ENCODE measurements at regions of chr1 and their contacts with region 1.

Region 1: GRCh38 chr1:41432481-41433280 is 51.8 kb downstream of the EDN2 start:
- DNase-seq: peak; percentile 72 to 85 (median 81)
- H3K4me3 ChIP-seq: no peak overlapping the region
- H3K27ac ChIP-seq: no peak overlapping the region
- H3K4me1 ChIP-seq: peaks cover 0 to 19% (median 8%) of the 10 kb centered on the region in 4 experiments
- H3K27me3 ChIP-seq: peaks cover 0 to 24% (median 9%) of the 10 kb centered on the region in 5 experiments

Region 2: DNA sequence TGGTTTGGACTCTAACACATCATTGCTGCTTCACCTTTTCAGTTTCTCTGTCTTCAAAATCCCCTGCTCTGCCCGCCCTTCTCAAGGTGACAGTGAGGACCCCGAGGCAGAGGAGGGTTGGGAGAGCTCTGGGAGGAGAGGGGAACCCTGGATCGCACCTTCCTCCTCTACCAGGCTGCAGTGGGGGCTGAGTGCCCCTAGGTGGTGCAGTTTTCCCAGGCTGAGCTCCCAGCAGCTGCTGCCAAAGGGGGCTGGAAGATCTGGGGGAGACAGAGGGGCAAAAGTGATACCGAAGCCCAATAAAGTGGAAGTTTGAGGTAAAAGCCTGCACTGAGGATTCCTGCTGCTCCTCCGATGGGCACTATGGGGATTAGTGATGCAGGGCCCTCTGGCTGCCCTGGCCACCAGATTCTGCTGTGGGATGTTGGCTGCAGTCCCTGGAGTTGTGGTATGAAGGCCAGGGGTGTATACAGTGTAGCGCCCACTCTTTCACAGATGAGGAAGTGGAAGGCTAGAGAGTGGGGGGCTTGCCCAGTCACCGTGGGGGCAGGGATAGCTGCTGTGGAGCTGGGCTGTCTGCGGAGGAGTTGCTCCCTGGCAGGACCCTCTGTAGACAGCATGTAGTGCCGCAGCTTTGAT is 149.9 kb before region 1 on chr1:
- CTCF ChIA-PET with region 1: interaction called, 11 read pairs
- POLR2A ChIA-PET with region 1: no interaction called
- DNase-seq: peak; percentile 24 to 56 (median 53)
- H3K4me3 ChIP-seq: no peak overlapping the region
- H3K27ac ChIP-seq: no peak overlapping the region
- H3K4me1 ChIP-seq: peaks cover 0 to 6% (median 4%) of the 10 kb centered on the region in 4 experiments
- H3K27me3 ChIP-seq: peaks cover 0 to 18% (median under 1%) of the 10 kb centered on the region in 5 experiments

Region 3: GRCh38 chr1:41371630-41372599 is 60.8 kb before region 1 on chr1:
- CTCF ChIA-PET with region 1: no interaction called
- POLR2A ChIA-PET with region 1: no interaction called
- DNase-seq: peak in 2 of 3 donors; percentile 51 to 63
- H3K4me3 ChIP-seq: no peak overlapping the region
- H3K27ac ChIP-seq: peak overlapping the region in 1 of 2 experiments; percentile 32
- H3K4me1 ChIP-seq: peaks cover 0 to 36% (median 14%) of the 10 kb centered on the region in 4 experiments
- H3K27me3 ChIP-seq: peaks cover 0 to 15% (median 4%) of the 10 kb centered on the region in 5 experiments

Region 4: DNA sequence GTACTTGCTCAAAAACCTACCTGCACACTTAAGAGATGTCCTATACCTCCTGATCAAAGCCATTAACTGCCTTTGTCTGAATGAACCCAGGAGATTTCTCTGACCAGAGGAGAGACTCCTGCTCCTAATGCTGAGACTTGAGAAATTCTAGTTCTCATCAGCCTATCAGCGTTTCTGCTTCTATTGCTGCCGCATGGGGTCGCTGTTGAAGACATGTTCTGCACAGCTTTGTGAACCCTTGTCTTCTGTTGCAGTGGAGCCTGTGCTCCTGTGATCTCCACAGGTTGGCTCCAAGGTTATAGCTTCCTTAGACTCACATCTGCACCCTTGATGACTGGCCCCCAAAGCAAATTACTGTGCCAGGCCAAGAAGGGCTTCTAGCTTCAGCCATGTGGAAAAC is 11.6 kb after region 1 on chr1:
- CTCF ChIA-PET with region 1: interaction called, 15 read pairs
- POLR2A ChIA-PET with region 1: no interaction called
- DNase-seq: peak in 1 of 3 donors; percentile 19
- H3K4me3 ChIP-seq: no peak overlapping the region
- H3K27ac ChIP-seq: no peak overlapping the region
- H3K4me1 ChIP-seq: no peaks in the 10 kb centered on the region
- H3K27me3 ChIP-seq: no peaks in the 10 kb centered on the region

Measured in common myeloid progenitor, CD34-positive (primary cell).